ENCODE measurements at regions of chr1 and their contacts with region 1.

Region 1: DNA sequence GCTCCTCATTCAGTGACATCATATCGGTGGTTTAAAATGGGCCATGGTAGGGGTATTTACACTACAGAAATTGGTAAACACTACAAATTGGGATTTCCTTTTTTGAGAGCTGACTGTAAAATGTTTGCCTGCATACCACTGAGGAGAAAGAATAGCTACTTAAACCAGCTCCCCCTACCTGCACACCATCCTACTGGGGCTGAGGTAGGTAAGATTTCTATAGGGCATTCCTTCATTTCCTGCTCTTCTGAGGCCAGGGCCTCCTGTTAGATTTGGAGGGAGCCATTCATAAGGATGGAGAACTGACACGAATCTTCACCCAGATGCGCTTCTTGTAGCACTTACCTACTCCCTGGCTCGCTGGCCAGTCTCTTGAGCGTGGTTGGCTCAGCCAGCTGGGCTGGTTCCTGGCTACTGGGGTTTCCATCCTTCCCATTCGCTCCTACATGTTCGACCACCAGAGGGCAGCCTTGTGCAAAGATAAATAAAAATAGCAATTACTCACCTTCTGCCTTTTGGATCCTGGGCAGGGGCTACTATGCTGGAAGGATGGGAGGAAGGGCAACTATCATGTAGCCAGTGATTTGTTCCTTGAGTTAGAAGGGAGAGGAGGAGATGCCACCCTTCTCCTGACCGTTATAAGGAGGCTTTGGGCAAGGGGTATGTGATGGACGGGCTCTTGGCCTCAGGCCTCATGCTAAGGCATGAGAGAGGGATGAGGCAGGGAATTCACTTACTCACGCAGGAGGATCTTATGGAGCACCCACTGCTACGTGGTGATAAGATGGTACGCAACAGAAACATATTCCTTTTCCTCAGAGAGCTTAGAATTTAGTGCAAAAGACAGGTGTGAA is 10.7 kb downstream of the OPTC start:
- DNase-seq: no peak
- H3K4me3 ChIP-seq: no peak overlapping the region
- H3K27ac ChIP-seq: no peak overlapping the region
- H3K4me1 ChIP-seq: peaks cover 26% of the 10 kb centered on the region
- H3K27me3 ChIP-seq: no peaks in the 10 kb centered on the region
- CTCF ChIP-seq: peak; percentile 76 to 88 (median 86)
- POLR2A ChIP-seq: no peak

Region 2: DNA sequence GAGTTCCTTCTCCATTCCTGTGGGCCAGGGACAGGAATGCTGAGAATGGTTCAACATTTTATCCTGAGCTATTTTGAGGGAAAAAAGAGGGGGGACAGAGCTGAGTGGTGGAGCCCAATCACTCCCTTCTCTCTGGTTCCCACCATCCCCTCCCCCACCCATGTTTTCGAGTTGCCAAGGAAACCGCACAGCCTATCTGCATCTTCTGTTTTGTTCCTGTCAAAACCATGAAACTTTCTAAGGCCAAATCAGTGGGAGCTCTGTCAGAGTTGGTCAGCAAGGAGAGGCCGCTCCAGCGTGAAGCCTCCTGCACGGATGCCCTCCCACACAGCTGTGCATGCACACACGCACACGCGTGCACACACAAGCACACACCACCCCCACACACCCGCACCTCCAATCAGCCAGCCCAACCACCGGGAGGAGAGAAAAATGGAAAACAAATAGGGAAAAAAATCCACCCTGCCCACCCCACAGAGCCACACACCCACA is 67.6 kb after region 1 on chr1:
- intact Hi-C with region 1: no loop called
- DNase-seq: no peak
- H3K4me3 ChIP-seq: no peak overlapping the region
- H3K27ac ChIP-seq: no peak overlapping the region
- H3K4me1 ChIP-seq: no peaks in the 10 kb centered on the region
- H3K27me3 ChIP-seq: no peaks in the 10 kb centered on the region
- CTCF ChIP-seq: no peak
- POLR2A ChIP-seq: no peak

Region 3: DNA sequence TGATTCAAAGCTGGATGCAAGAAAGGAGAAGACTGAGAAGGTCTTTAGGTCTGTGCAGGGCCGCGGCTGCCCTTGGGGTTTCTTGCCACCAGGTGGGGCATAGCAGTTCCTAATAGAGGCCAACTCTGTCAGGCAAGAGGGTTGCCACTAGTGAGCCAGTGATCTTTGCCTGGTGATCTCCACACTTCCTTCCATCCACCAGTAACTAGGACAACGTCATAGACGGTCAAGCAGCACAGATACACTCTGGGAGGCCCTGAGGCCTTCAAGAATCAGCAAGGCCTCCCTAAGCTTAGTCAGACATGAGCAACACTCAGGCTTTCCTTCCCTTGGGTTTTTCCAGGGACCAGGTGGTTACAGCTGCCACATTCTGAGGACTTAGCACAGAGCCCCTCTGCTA is 89.1 kb after region 1 on chr1:
- intact Hi-C with region 1: no loop called
- DNase-seq: no peak
- H3K4me3 ChIP-seq: no peak overlapping the region
- H3K27ac ChIP-seq: no peak overlapping the region
- H3K4me1 ChIP-seq: peaks cover 18% of the 10 kb centered on the region
- H3K27me3 ChIP-seq: no peaks in the 10 kb centered on the region
- CTCF ChIP-seq: no peak
- POLR2A ChIP-seq: no peak

Region 4: DNA sequence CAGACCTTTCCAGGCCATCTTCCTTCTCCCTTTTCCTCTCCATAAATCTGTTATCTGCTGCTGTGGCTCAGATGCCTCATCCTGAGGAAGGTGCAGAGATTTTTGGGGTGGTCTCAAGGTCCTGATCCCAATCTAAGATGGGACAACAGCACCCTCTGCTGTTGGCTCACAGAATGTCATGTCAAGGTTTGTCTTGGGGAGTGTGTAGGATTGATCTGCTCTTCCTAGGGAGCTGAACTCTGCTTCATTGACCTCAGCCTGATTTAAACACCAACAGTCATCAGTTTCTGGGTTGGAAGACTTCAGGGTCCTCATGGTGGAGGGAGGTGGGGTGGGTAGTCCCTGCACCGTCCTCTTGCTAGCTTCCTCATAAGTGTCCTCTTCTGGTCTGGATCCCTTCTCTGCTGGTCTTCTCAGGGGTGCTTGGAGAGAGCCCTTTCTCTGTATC is 197.5 kb after region 1 on chr1:
- intact Hi-C with region 1: loop called (anchors 2 kb)
- DNase-seq: no peak
- H3K4me3 ChIP-seq: no peak overlapping the region
- H3K27ac ChIP-seq: peak overlapping the region; percentile 27
- H3K4me1 ChIP-seq: no peaks in the 10 kb centered on the region
- H3K27me3 ChIP-seq: no peaks in the 10 kb centered on the region
- CTCF ChIP-seq: peak; percentile 93 to 95 (median 94)
- POLR2A ChIP-seq: no peak

Region 5: DNA sequence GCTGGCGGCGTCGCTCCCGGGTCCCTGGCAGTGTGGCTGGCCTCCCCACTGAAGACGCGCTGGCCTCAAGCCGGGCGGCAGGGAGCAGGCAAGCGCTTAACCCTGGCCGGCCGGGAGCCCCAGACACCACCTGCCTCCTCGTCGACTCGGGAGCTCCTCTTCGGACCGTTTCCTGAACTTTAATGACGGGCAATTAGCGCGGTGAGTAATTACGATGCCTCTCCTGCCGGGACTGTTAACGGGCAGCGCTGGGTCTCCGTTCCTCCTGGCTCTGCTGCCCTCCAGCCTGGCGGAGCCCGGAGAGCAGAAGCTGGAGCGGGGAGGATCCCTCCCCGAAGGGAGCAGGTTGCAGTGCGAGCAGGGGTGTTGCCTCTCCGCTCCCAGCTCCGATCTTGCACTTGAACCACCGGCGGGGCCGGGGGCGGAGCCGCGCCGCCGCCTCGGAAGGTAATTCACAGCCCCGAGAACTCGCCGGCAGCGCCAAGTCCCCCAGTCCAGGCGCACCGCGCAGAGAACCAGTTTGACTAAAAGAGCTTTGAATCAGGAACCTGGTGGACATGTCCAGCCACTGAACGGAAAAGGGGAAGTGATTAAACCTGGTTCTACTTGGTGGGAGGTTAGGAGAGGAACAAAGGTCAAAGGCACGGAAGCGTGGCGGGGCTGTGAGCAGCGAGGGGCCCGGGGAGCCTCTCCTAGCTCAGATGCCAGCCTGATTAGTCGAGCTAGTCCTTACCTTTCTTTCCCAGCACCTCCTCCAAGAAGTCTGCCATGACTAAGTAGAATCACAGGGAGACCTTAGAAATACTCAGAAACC is 873.4 kb after region 1 on chr1:
- intact Hi-C with region 1: no loop called
- DNase-seq: peak in 1 of 2 donors; percentile 20
- H3K4me3 ChIP-seq: peak overlapping the region; percentile 47 to 53
- H3K27ac ChIP-seq: no peak overlapping the region
- H3K4me1 ChIP-seq: peaks cover 15% of the 10 kb centered on the region
- H3K27me3 ChIP-seq: no peaks in the 10 kb centered on the region
- CTCF ChIP-seq: no peak
- POLR2A ChIP-seq: no peak

Measured in vagina (tissue), 2 donors.